Calu3 (cell line): ENCODE measurements at regions of chr3 and their contacts with region 1.

Region 1: GRCh38 chr3:8776406-8776805 is 7.0 kb upstream of the OXTR start:
- DNase-seq: no peak
- H3K4me3 Mint-ChIP-seq: no peak overlapping the region
- H3K27ac Mint-ChIP-seq: no peak overlapping the region
- H3K4me1 Mint-ChIP-seq: no peaks in the 10 kb centered on the region
- H3K27me3 Mint-ChIP-seq: peaks cover 23% of the 10 kb centered on the region
- CTCF ChIP-seq: no peak

Region 2: DNA sequence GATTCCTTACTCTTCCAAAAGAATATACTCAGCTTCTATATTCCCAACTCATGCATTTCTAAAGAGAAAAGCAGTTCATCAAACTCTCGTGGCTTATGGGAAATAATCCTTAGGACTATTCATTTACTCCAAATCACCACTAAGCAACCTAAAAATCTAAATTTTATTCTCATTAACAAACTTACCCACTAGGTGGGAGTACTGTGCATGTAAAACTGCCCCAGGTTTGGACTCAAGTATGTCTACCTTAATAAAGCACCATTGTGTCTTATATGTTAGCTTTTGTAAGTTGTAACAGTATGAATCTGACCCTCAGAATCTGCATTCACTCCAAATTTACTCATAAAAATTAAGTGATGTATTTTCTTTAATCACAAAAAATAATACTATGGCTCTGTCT is 161.6 kb after region 1 on chr3:
- CTCF ChIA-PET with region 1: no interaction called
- intact Hi-C with region 1: loop called (anchors 10 kb)
- DNase-seq: no peak
- H3K4me3 Mint-ChIP-seq: no peak overlapping the region
- H3K27ac Mint-ChIP-seq: peak overlapping the region; percentile 69
- H3K4me1 Mint-ChIP-seq: peaks cover 25% of the 10 kb centered on the region
- H3K27me3 Mint-ChIP-seq: no peaks in the 10 kb centered on the region
- CTCF ChIP-seq: no peak